ENCODE measurements at regions of chr1 and their contacts with region 1.

Region 1: GRCh38 chr1:161739865-161740566 is 9.6 kb upstream of the DUSP12 start:
- DNase-seq: peak; percentile 71 to 88 (median 84)
- H3K4me3 ChIP-seq: peak overlapping the region in 1 of 3 experiments; percentile 52
- H3K4me3 Mint-ChIP-seq: peak overlapping the region in 1 of 2 donors; percentile 71
- H3K27ac ChIP-seq: peak overlapping the region; percentile 48 to 85
- H3K27ac Mint-ChIP-seq: peak overlapping the region; percentile 71 to 93 (median 90)
- H3K4me1 ChIP-seq: peaks cover 32 to 38% of the 10 kb centered on the region in 2 donors
- H3K4me1 Mint-ChIP-seq: peaks cover 42% of the 10 kb centered on the region
- H3K27me3 ChIP-seq: peaks cover 30 to 33% of the 10 kb centered on the region in 2 donors
- H3K27me3 Mint-ChIP-seq: peaks cover 13 to 42% (median 41%) of the 10 kb centered on the region in 3 donors
- CTCF ChIP-seq: no peak

Region 2: DNA sequence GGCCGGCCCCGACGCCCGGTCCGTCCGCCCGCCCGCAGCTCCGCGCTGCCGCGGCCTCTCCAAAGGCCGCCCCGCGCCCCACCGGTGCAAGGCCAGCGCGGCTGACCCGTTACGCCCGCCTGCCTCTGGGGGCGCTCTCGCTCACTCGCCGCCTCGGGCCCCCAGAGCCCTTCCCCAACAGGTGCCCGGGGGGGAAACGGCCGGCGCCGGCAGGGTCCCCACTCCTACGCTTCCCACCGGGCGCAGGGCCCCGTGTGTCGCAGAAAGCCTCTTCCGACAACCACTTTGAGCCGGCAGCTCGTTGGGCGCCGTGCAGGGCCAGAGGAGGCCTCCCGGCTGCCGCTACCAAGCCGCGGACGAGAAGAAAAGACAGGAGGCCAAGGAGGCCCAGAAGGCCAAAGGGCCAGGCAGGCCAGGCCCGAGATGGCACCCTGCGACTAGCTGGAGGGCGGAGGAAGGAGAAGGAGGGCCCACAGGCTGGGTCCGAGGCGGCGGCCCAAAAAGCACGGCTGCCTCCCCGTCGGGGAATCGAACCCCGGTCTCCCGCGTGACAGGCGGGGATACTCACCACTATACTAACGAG is 299.6 kb before region 1 on chr1:
- intact Hi-C with region 1: no loop called
- DNase-seq: peak; percentile 28 to 46 (median 29)
- H3K4me3 ChIP-seq: peak overlapping the region; percentile 30 to 72 (median 43)
- H3K4me3 Mint-ChIP-seq: peak overlapping the region; percentile 83 to 91
- H3K27ac ChIP-seq: no peak overlapping the region
- H3K27ac Mint-ChIP-seq: no peak overlapping the region
- H3K4me1 ChIP-seq: peaks cover 6 to 15% of the 10 kb centered on the region in 2 donors
- H3K4me1 Mint-ChIP-seq: peaks cover 11% of the 10 kb centered on the region
- H3K27me3 ChIP-seq: peaks cover 37 to 41% of the 10 kb centered on the region in 2 donors
- H3K27me3 Mint-ChIP-seq: peaks cover 53 to 69% (median 54%) of the 10 kb centered on the region in 3 donors
- CTCF ChIP-seq: peak; percentile 51

Region 3: DNA sequence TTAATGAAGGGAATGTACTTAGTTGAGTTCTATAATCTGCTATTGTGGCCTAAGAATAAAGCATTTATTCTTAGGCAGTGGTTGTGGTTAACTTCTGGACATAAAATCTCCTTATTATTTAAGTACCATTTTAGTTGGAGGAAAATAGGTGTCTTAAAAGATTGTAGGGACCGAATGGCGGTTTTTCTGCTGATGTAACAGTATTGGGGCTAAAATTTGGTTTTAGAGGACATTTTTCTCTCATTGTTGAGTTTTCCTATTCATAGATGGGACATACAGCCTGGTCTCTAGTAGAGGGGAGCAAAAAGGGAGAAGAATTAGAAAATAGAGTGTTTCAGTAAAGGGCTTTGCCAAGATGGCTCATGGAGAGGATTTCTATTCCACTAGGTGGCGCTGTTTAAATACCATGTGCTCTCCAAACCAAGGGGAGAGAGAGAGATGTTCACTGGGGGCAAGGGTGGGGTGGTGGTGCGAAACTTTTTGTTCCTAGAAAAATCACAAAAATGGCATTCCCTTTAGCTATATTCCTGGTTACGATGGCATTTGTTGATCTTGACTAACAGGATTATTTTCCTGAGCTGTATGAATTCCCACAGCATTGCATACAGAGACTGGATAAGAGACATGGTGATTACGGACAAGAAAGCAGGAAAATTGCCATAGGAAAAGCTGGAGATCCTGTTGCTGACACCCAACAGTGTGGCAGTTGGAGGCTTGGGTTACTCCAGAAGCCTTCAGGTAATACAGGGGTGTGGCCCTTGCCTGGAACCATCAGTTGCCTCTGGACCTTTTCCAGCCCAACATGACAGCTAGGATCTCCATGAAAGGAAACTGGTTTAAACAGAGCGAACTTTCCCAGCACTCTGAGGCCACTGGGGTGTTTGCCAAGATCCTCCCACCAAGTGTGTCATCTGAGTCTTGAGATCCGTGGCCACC is 252.9 kb before region 1 on chr1:
- intact Hi-C with region 1: loop called (anchors 2 to 5 kb)
- DNase-seq: peak; percentile 55 to 77 (median 71)
- H3K4me3 ChIP-seq: peak overlapping the region in 1 of 3 experiments; percentile 39
- H3K4me3 Mint-ChIP-seq: no peak overlapping the region
- H3K27ac ChIP-seq: no peak overlapping the region
- H3K27ac Mint-ChIP-seq: no peak overlapping the region
- H3K4me1 ChIP-seq: peaks cover 19 to 29% of the 10 kb centered on the region in 2 donors
- H3K4me1 Mint-ChIP-seq: peaks cover 27% of the 10 kb centered on the region
- H3K27me3 ChIP-seq: peaks cover 25 to 41% of the 10 kb centered on the region in 2 donors
- H3K27me3 Mint-ChIP-seq: peaks cover 25 to 37% (median 30%) of the 10 kb centered on the region in 3 donors
- CTCF ChIP-seq: peak; percentile 74

Region 4: GRCh38 chr1:161691846-161692245 is 48.2 kb before region 1 on chr1:
- intact Hi-C with region 1: no loop called
- DNase-seq: no peak
- H3K4me3 ChIP-seq: no peak overlapping the region
- H3K4me3 Mint-ChIP-seq: peak overlapping the region; percentile 24 to 67
- H3K27ac ChIP-seq: no peak overlapping the region
- H3K27ac Mint-ChIP-seq: no peak overlapping the region
- H3K4me1 ChIP-seq: no peaks in the 10 kb centered on the region
- H3K4me1 Mint-ChIP-seq: no peaks in the 10 kb centered on the region
- H3K27me3 ChIP-seq: peaks cover 28 to 73% of the 10 kb centered on the region in 2 donors
- H3K27me3 Mint-ChIP-seq: peaks cover 46 to 88% (median 71%) of the 10 kb centered on the region in 3 donors
- CTCF ChIP-seq: no peak

Region 5: GRCh38 chr1:161721738-161722343 is 18.2 kb before region 1 on chr1:
- intact Hi-C with region 1: loop called in 1 of 2 experiments (anchors 2 kb)
- DNase-seq: peak; percentile 88 to 94 (median 92)
- H3K4me3 ChIP-seq: peak overlapping the region in 1 of 3 experiments; percentile 7
- H3K4me3 Mint-ChIP-seq: peak overlapping the region in 1 of 2 donors; percentile 97
- H3K27ac ChIP-seq: peak overlapping the region in 1 of 2 donors; percentile 28
- H3K27ac Mint-ChIP-seq: peak overlapping the region; percentile 37 to 88 (median 80)
- H3K4me1 ChIP-seq: peaks cover 54 to 66% of the 10 kb centered on the region in 2 donors
- H3K4me1 Mint-ChIP-seq: peaks cover 56% of the 10 kb centered on the region
- H3K27me3 ChIP-seq: peaks cover 49 to 81% of the 10 kb centered on the region in 2 donors
- H3K27me3 Mint-ChIP-seq: peaks cover 71 to 91% (median 79%) of the 10 kb centered on the region in 3 donors
- CTCF ChIP-seq: no peak

Region 6: DNA sequence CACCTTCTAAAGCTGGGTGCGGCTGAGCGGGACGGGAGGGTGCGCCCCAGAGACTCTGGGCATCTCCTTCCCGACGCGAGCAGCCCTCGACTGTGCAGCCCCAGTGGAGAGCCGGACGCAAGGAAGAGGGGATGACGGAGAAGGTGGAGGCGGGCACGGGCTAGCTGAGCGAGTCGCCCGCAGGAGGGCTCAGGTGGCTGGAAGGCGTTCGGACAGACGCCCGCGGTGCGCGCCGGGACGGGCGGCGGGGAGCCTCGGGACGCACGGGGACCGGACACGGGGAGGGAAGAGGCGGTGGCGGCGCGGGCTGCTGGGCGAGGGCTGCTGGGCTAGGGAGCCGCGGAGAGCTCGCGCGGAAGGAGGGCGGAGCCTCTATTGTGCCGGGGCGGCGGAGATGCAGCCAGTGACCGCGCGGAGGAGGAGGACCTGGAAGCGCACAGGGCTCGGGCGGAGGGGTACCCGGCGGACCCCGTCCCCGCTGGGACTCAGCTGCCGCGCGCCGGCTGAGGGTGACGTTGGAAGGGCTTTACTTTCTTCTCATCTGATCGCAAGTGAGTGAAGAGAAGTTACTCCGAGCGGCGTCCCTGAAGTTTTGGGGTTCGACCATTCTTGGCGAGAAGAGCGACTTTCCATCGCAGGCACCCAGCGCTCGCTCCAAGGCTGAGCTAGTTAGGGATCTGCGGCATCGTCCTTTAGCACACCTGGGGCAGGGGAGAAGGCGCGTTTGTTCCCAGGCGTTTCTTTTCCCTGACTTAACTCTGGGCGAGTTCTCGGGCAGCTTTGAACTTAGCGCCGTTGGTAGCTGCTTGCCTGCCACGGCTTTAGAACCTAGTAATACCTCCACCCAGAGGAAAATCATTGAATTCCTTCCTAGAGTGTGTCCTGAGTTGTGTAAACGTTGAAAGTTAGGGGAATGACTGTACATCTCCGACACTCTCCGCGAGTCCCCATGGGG is 283.8 kb after region 1 on chr1 and contains the start of gene OLFML2B:
- intact Hi-C with region 1: no loop called
- DNase-seq: peak; percentile 54 to 64 (median 57)
- H3K4me3 ChIP-seq: peak within 1 kb of the TSS; percentile 55 to 85 (median 74)
- H3K4me3 Mint-ChIP-seq: peak within 1 kb of the TSS; percentile 86 to 94
- H3K27ac ChIP-seq: no peak within 1 kb of the TSS
- H3K27ac Mint-ChIP-seq: peak within 1 kb of the TSS in 5 of 7 donors; percentile 58 to 81 (median 68)
- H3K4me1 ChIP-seq: peaks cover 19 to 28% of the 10 kb centered on the region in 2 donors
- H3K4me1 Mint-ChIP-seq: peaks cover 34% of the 10 kb centered on the region
- H3K27me3 ChIP-seq: peaks cover 6 to 40% of the 10 kb centered on the region in 2 donors
- H3K27me3 Mint-ChIP-seq: peaks cover 33 to 59% (median 37%) of the 10 kb centered on the region in 3 donors
- CTCF ChIP-seq: no peak
- polyA plus RNA-seq, gene OLFML2B: 0.66 to 1.4 (median 0.95) TPM

Measured in CD14-positive monocyte (primary cell).